AG04450 (cell line): ENCODE measurements at regions of chr1 and their contacts with region 1.

Region 1: DNA sequence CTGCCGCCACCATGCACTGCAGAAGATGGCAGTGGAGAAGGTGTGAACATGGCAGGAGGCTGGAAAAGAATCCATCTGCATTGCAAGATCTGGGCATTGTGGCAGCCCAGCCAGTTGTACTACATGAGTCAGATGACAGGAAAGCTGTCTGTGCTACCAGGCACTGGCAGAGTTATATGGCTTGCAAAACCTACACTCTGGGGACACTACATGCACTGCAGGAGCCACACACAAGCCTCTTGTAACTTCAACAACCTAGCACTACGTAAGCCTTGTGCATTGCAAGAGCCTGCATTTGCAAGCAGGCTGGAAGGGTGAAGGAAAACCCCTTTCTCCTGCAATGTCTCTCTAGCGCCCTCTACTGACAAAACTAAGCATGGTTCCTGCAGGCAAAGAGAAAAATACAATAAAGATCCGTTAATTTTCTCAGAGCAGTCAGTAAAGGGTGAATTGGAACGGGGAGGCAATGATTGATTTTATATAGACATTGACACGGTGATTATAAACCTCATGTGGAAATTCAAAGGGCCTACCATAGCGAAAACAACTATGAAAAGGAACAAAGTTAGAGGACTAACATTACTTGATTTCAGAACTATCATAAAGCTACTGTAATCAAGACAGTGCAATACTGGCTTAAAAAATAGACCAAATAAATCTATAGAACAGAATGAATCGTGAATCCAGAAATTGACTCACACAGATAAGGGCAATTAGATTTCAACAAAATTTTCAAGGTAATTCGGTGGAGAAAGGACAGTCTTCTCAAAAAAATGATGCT is 26.2 kb upstream of the DYNLT5 start:
- DNase-seq: peak; percentile 41
- H3K4me3 ChIP-seq: no peak overlapping the region
- H3K27ac ChIP-seq: no peak overlapping the region
- H3K27me3 ChIP-seq: no peaks in the 10 kb centered on the region
- CTCF ChIP-seq: peak; percentile 99

Region 2: GRCh38 chr1:66711420-66711819 is 14.7 kb before region 1 on chr1:
- CTCF ChIA-PET with region 1: interaction called, 16 read pairs
- POLR2A ChIA-PET with region 1: no interaction called
- DNase-seq: no peak
- H3K4me3 ChIP-seq: no peak overlapping the region
- H3K27ac ChIP-seq: no peak overlapping the region
- H3K27me3 ChIP-seq: no peaks in the 10 kb centered on the region
- CTCF ChIP-seq: no peak

Region 3: GRCh38 chr1:66737836-66738235 is 11.8 kb after region 1 on chr1:
- CTCF ChIA-PET with region 1: interaction called, 19 read pairs
- POLR2A ChIA-PET with region 1: no interaction called
- DNase-seq: no peak
- H3K4me3 ChIP-seq: no peak overlapping the region
- H3K27ac ChIP-seq: no peak overlapping the region
- H3K27me3 ChIP-seq: no peaks in the 10 kb centered on the region
- CTCF ChIP-seq: no peak